ENCODE measurements at regions of chr4 and their contacts with region 1.

Region 1: DNA sequence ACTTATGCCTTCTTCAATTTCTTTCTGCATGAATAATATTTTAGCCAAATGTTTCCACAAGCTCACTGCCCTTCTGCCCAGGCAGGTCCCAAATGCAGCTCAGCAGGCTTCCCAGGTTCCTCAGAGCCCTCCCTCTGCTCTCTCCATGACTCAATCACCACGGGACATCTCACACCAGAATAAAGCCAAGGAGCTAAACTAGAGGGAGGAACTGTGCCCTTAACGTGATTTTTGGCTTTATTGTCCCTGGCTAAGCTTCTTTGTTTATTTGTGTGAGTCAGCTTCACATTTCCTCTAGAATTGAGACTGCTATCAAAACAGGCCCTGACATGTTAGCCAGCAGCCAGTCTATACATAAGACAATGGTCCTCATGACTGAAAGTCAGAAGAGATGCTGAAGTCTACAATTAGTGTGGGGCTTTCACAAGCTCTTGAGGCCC is 186.4 kb upstream of the GALNT7 start:
- DNase-seq: no peak
- H3K4me3 Mint-ChIP-seq: no peak overlapping the region
- H3K27ac Mint-ChIP-seq: no peak overlapping the region
- H3K4me1 Mint-ChIP-seq: peaks cover 19% of the 10 kb centered on the region
- H3K27me3 Mint-ChIP-seq: no peaks in the 10 kb centered on the region
- CTCF ChIP-seq: no peak

Region 2: DNA sequence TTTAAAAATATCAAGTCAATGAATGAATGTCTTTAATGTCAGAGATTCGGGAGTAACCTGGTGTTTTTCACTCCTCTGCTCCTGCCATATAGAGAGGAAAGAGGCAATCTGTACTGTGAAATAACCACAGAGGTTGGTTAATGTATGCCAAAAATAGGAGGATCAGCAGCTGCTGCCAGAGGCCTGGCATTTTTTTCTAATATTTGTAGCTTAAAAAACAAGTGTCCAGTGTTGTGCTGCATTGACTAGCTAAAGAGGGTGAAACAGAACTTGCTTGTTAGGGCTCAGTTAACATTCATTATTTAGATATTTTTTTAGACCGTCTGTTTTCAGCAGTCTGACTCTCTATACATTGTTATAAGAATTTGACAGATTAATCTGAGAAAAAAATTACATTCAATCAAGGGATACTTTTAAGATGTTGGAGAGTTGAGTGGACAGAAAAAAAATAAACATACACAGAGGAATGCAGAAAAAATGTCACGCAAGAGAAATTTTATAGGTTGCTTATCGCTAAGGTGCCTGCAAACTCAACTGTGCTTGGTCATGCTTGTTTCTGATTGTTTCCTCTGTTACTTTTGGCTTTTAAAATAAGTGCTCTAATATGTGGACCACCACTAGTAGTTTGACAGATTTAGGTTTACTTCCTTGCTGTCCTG is 205.8 kb before region 1 on chr4:
- CTCF ChIA-PET with region 1: no interaction called
- intact Hi-C with region 1: no loop called
- DNase-seq: no peak
- H3K4me3 Mint-ChIP-seq: no peak overlapping the region
- H3K27ac Mint-ChIP-seq: no peak overlapping the region
- H3K4me1 Mint-ChIP-seq: no peaks in the 10 kb centered on the region
- H3K27me3 Mint-ChIP-seq: no peaks in the 10 kb centered on the region
- CTCF ChIP-seq: no peak

Region 3: GRCh38 chr4:172892300-172892699 is 89.9 kb before region 1 on chr4:
- CTCF ChIA-PET with region 1: no interaction called
- intact Hi-C with region 1: loop called (anchors 10 kb)
- DNase-seq: peak; percentile 10
- H3K4me3 Mint-ChIP-seq: no peak overlapping the region
- H3K27ac Mint-ChIP-seq: no peak overlapping the region
- H3K4me1 Mint-ChIP-seq: no peaks in the 10 kb centered on the region
- H3K27me3 Mint-ChIP-seq: no peaks in the 10 kb centered on the region
- CTCF ChIP-seq: peak; percentile 32